CD4-positive, alpha-beta memory T cell (primary cell): ENCODE measurements at regions of chr1 and their contacts with region 1.

Region 1: GRCh38 chr1:208238710-208239472 is 5.3 kb downstream of the PLXNA2 start:
- DNase-seq: peak in 4 of 5 donors; percentile 9 to 24 (median 12)
- H3K4me3 ChIP-seq: no peak overlapping the region
- H3K4me3 Mint-ChIP-seq: no peak overlapping the region
- H3K27ac ChIP-seq: no peak overlapping the region
- H3K27ac Mint-ChIP-seq: no peak overlapping the region
- H3K4me1 ChIP-seq: peaks cover 17% of the 10 kb centered on the region
- H3K4me1 Mint-ChIP-seq: peaks cover 5 to 16% (median 11%) of the 10 kb centered on the region in 4 donors
- H3K27me3 ChIP-seq: peaks cover 24% of the 10 kb centered on the region
- H3K27me3 Mint-ChIP-seq: peaks cover 22 to 37% of the 10 kb centered on the region in 2 donors

Region 2: GRCh38 chr1:208132287-208132883 is 106.5 kb before region 1 on chr1:
- CTCF ChIA-PET with region 1: interaction called, 44 read pairs
- POLR2A ChIA-PET with region 1: interaction called, 11 read pairs
- intact Hi-C with region 1: no loop called
- DNase-seq: peak in 4 of 5 donors; percentile 5 to 27 (median 20)
- H3K4me3 ChIP-seq: no peak overlapping the region
- H3K4me3 Mint-ChIP-seq: peak overlapping the region in 1 of 8 donors; percentile 27
- H3K27ac ChIP-seq: no peak overlapping the region
- H3K27ac Mint-ChIP-seq: no peak overlapping the region
- H3K4me1 ChIP-seq: peaks cover 5% of the 10 kb centered on the region
- H3K4me1 Mint-ChIP-seq: peaks cover 2 to 8% (median 6%) of the 10 kb centered on the region in 4 donors
- H3K27me3 ChIP-seq: no peaks in the 10 kb centered on the region
- H3K27me3 Mint-ChIP-seq: peaks cover 8 to 22% of the 10 kb centered on the region in 2 donors